MCF 10A (cell line): ENCODE measurements at regions of chr1 and their contacts with region 1.

Region 1: GRCh38 chr1:234610348-234611152 is 572 bp upstream of the IRF2BP2 start:
- DNase-seq: peak; percentile 96
- H3K4me3 Mint-ChIP-seq: peak overlapping the region; percentile 95
- H3K27ac Mint-ChIP-seq: peak overlapping the region; percentile 95
- H3K4me1 Mint-ChIP-seq: peaks cover 51% of the 10 kb centered on the region
- H3K27me3 Mint-ChIP-seq: no peaks in the 10 kb centered on the region
- CTCF ChIP-seq: no peak

Region 2: GRCh38 chr1:234114648-234115307 is 495.8 kb before region 1 on chr1:
- CTCF ChIA-PET with region 1: no interaction called
- POLR2A ChIA-PET with region 1: no interaction called
- intact Hi-C with region 1: loop called (anchors 5 kb)
- DNase-seq: peak; percentile 84
- H3K4me3 Mint-ChIP-seq: peak overlapping the region; percentile 57
- H3K27ac Mint-ChIP-seq: no peak overlapping the region
- H3K4me1 Mint-ChIP-seq: peaks cover 13% of the 10 kb centered on the region
- H3K27me3 Mint-ChIP-seq: no peaks in the 10 kb centered on the region
- CTCF ChIP-seq: peak; percentile 97

Region 3: DNA sequence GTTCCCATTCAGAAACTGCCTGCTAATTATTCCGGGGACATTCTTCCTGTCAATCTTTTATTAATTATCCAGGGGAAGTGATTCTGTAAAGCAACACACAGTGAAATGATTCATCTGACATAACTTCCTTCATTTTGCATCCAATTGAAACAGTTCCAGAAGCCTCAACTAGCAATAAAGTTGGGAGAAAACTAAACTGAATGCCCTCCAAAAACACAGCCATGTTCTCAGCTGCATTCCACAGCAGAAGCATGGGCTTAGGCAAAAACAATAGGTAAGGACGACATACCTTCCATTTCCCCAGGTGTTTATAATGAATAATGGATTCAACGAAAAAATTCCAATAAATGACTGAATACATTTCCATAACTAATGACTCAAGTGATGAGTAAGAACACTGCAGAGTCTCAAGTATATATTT is 94.7 kb before region 1 on chr1:
- CTCF ChIA-PET with region 1: no interaction called
- POLR2A ChIA-PET with region 1: interaction called, 904 read pairs
- intact Hi-C with region 1: no loop called
- DNase-seq: peak; percentile 76
- H3K4me3 Mint-ChIP-seq: no peak overlapping the region
- H3K27ac Mint-ChIP-seq: peak overlapping the region; percentile 80
- H3K4me1 Mint-ChIP-seq: peaks cover 27% of the 10 kb centered on the region
- H3K27me3 Mint-ChIP-seq: no peaks in the 10 kb centered on the region
- CTCF ChIP-seq: no peak

Region 4: GRCh38 chr1:234631721-234632125 is 21.2 kb after region 1 on chr1:
- CTCF ChIA-PET with region 1: interaction called, 7 read pairs
- POLR2A ChIA-PET with region 1: interaction called, 307 read pairs
- intact Hi-C with region 1: loop called (anchors 1 kb)
- DNase-seq: peak; percentile 75
- H3K4me3 Mint-ChIP-seq: no peak overlapping the region
- H3K27ac Mint-ChIP-seq: peak overlapping the region; percentile 78
- H3K4me1 Mint-ChIP-seq: peaks cover 27% of the 10 kb centered on the region
- H3K27me3 Mint-ChIP-seq: no peaks in the 10 kb centered on the region
- CTCF ChIP-seq: no peak

Region 5: GRCh38 chr1:234691567-234691966 is 81.0 kb after region 1 on chr1:
- CTCF ChIA-PET with region 1: interaction called, 7 read pairs
- POLR2A ChIA-PET with region 1: interaction called, 25 read pairs
- intact Hi-C with region 1: loop called (anchors 1 kb)
- DNase-seq: peak; percentile 53
- H3K4me3 Mint-ChIP-seq: no peak overlapping the region
- H3K27ac Mint-ChIP-seq: no peak overlapping the region
- H3K4me1 Mint-ChIP-seq: no peaks in the 10 kb centered on the region
- H3K27me3 Mint-ChIP-seq: no peaks in the 10 kb centered on the region
- CTCF ChIP-seq: peak; percentile 30

Region 6: GRCh38 chr1:234963180-234963903 is 352.8 kb after region 1 on chr1:
- CTCF ChIA-PET with region 1: interaction called, 4 read pairs
- POLR2A ChIA-PET with region 1: interaction called, 11 read pairs
- intact Hi-C with region 1: no loop called
- DNase-seq: peak; percentile 50
- H3K4me3 Mint-ChIP-seq: no peak overlapping the region
- H3K27ac Mint-ChIP-seq: peak overlapping the region; percentile 28
- H3K4me1 Mint-ChIP-seq: peaks cover 38% of the 10 kb centered on the region
- H3K27me3 Mint-ChIP-seq: no peaks in the 10 kb centered on the region
- CTCF ChIP-seq: no peak

Region 7: GRCh38 chr1:235060607-235061470 is 450.3 kb after region 1 on chr1:
- CTCF ChIA-PET with region 1: interaction called, 6 read pairs
- POLR2A ChIA-PET with region 1: interaction called, 406 read pairs
- intact Hi-C with region 1: loop called (anchors 1 kb)
- DNase-seq: peak; percentile 76
- H3K4me3 Mint-ChIP-seq: no peak overlapping the region
- H3K27ac Mint-ChIP-seq: no peak overlapping the region
- H3K4me1 Mint-ChIP-seq: peaks cover 38% of the 10 kb centered on the region
- H3K27me3 Mint-ChIP-seq: no peaks in the 10 kb centered on the region
- CTCF ChIP-seq: no peak